GM10248 (cell line): ENCODE measurements at regions of chr7 and their contacts with region 1.

Region 1: GRCh38 chr7:99616359-99617191 is at the start of gene ZSCAN25:
- DNase-seq: peak; percentile 95
- CTCF ChIP-seq: peak; percentile 65

Region 2: DNA sequence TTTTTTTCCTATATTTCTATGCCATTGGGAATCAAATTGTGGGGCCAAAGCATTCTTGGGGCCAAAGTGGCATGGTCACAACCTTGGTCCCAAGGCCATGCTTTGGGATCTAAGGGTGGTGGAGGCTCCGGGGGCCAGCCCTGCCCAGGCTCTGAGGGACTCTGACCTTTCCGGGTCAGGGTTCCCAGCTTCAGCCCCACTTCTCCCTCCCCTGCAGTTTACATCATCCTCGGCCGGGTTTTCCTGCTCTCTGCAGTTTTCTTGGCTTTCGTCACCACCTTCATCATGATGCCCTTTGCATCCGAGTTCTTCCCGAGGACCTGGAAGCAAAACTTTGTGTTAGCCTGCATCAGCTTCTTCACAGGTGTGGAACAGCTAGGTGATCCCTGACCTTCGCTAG is 10.0 kb before region 1 on chr7:
- CTCF ChIA-PET with region 1: interaction called, 13 read pairs
- POLR2A ChIA-PET with region 1: no interaction called
- DNase-seq: no peak
- CTCF ChIP-seq: no peak

Region 3: DNA sequence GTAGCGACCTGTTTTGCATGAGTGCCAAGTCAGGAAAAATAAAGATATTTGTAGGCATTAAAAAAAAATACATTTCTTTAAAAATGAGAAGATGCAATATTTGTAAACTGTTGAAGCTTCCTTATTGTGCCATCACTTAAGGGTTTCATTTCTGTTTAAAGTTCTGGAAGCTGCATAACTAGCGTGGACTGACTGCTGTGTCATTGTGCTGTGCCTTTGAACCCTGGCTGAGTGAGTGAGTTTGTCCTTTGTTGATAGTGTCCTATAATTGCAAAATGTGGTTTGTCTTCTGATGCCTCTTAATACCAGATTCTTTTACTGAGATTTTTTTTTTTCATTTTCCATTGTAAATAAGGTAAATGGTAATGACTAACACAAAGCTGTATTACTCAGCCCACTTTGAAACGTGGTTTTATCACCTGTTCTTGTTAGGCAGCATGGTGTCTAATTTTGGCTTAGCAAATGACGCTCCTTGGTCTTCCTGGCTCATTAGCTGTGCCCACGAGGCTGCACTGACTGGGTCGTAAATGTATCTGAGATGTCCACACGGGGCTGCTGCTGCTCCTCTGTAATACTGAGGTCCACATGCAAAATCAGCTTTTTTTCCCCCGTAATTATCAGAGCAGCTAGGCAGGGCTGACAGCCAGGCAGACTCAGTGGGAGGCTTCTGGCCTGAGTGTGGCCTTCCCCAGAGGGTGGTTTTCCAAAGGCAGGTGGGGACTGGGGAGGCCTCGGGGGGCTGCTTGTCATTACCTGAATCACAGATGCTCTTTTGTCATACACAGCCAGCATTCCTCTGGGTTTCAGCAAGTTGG is 14.9 kb after region 1 on chr7:
- CTCF ChIA-PET with region 1: interaction called, 10 read pairs
- POLR2A ChIA-PET with region 1: no interaction called
- DNase-seq: no peak
- CTCF ChIP-seq: no peak